IMR-90 (cell line): ENCODE measurements at regions of chr12 and their contacts with region 1.

Region 1: DNA sequence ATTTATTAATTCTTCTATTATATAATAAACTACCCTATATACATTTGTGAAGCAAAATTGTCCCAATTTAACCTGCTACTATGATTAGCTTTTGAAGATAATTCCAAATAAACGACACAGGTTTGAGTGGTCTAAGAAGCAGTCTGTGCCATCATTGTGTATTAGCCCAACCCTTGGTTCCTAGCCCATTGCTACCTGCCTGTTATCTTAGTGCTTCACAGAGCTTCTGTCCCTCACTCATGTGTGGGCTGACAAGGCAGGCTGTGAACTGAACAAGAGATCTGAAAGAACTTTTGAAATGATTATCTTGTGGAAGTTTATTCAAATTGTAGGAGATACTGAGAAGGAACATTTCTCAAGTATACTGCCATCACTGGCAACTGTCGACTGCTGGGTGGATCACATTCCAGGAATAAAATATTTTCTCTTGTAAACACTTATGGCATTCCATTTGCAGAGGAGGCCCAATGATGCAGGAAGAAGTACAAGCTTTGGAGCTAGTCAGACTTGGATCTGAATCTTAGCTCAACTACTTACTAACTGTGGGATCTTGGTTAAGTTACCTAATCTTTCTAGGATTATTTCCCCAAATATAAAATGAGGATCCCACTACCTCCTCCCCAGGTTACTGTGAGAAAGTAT is 7.8 kb upstream of the MTERF2 start:
- DNase-seq: peak; percentile 74
- ATAC-seq: peak; percentile 99
- H3K4me3 ChIP-seq: no peak overlapping the region
- H3K27ac ChIP-seq: peak overlapping the region; percentile 73; the same call in 1 of the 2 replicates
- H3K4me1 ChIP-seq: peaks cover 4% of the 10 kb centered on the region
- H3K27me3 ChIP-seq: no peaks in the 10 kb centered on the region
- CTCF ChIP-seq: no peak
- POLR2A ChIP-seq: no peak
- RAD21 ChIP-seq: no peak

Region 2: DNA sequence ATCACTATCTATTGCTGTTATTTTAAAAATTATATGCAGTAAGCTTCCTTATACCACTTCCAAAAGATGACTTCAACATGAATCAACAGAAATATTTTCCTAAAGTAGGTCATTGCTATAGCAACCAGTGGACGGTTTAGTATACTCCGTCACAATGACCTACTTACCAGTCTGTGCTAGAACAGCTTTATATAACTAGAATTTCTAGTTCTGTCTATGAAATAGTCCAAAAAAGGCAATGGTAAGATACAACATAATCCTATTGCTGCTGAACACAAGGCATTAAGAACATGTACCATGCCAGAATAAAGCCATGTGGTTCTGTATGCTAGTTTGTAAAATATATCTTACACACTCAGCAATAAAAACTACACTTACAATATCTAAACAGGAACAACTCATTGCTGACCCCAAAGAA is 32.9 kb after region 1 on chr12:
- CTCF ChIA-PET with region 1: interaction called, 3 read pairs
- POLR2A ChIA-PET with region 1: no interaction called
- dilution Hi-C with region 1: no loop called
- in situ Hi-C with region 1: no loop called
- intact Hi-C with region 1: loop called (anchors 2 kb)
- DNase-seq: peak; percentile 96
- ATAC-seq: peak; percentile 98
- H3K4me3 ChIP-seq: no peak overlapping the region
- H3K27ac ChIP-seq: no peak overlapping the region
- H3K4me1 ChIP-seq: peaks cover 5% of the 10 kb centered on the region; the same call in 1 of the 2 replicates
- H3K27me3 ChIP-seq: no peaks in the 10 kb centered on the region
- CTCF ChIP-seq: no peak
- POLR2A ChIP-seq: peak; percentile 72
- RAD21 ChIP-seq: no peak